ENCODE measurements at regions of chr2 and their contacts with region 1.

Region 1: DNA sequence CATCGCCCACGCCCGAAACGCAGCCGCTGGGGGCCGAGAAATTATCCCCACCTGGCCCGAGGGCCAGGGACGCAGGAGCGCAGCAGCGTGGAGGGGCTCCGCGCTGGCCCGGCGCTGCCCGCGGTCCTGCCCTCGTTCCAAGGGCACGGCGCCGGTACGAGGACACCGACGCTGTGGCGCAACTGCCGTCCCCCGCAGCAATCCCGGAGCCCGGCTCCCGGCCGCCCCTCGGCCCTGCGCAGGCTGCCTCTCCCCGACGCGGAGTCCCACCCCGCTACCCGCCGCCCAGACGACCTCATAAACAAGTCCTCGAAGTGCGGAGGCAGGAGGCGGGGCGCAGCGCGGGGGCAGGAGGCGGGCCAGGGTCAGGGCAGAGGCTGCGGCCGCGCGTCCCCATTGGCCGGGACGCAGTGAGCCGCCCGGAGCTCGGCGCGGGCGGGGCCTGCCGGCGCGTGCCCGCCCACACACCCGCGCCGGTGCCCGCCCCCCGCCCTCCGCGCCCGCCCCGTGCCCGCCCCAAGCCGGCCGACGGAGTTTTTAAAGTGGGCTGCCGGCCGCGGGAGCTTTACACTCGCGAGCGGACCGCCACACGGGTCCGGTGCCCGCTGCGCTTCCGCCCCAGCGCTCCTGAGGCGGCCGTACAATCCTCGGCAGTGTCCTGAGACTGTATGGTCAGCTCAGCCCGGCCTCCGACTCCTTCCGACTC is at the start of gene EPAS1:
- DNase-seq: peak; percentile 82 to 99 (median 94)
- ATAC-seq: peak; percentile 81
- H3K4me3 ChIP-seq: peak within 1 kb of the TSS; percentile 79 to 93
- H3K27ac ChIP-seq: peak within 1 kb of the TSS; percentile 91 to 97
- H3K4me1 ChIP-seq: peaks cover 12 to 38% of the 10 kb centered on the region in 2 donors
- H3K27me3 ChIP-seq: peaks cover 0 to 57% of the 10 kb centered on the region in 2 donors
- CTCF ChIP-seq: no peak
- polyA plus RNA-seq, gene EPAS1: 190 to 277 (median 237) TPM

Region 2: DNA sequence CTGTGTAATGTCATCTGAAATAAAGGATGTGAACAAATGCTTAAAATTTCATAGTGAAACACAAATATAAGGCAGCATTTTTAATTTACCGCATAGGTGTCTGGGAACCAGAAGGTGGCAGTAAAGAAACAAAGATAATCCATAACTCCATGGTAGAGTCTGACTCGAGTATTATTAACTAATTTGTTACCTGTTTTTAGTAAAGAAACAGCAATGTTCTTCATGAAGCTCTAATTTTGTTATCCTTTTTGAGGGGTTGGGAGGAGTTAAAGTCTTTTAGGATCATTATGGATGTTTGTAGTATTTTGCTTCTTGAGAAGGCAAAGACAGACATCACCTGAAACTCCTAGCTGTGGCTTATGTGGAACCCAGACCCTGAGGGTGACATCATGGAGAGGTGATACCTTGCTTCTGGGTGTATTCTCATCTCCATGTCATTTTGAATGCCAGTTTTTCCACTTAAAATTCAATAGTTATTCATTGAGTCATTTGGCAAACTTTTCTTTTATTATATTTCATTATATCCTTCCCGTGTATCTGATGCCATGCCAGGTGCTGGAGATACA is 286.0 kb before region 1 on chr2:
- intact Hi-C with region 1: loop called in 1 of 2 experiments (anchors 10 kb)
- DNase-seq: peak in 1 of 4 donors; percentile 53
- ATAC-seq: peak; percentile 81
- H3K4me3 ChIP-seq: no peak overlapping the region
- H3K27ac ChIP-seq: no peak overlapping the region
- H3K4me1 ChIP-seq: peaks cover 0 to 17% of the 10 kb centered on the region in 2 donors
- H3K27me3 ChIP-seq: no peaks in the 10 kb centered on the region
- CTCF ChIP-seq: peak; percentile 32 to 75

Region 3: GRCh38 chr2:46025676-46026075 is 271.3 kb before region 1 on chr2:
- intact Hi-C with region 1: no loop called
- DNase-seq: no peak
- ATAC-seq: no peak
- H3K4me3 ChIP-seq: no peak overlapping the region
- H3K27ac ChIP-seq: no peak overlapping the region
- H3K4me1 ChIP-seq: no peaks in the 10 kb centered on the region
- H3K27me3 ChIP-seq: no peaks in the 10 kb centered on the region
- CTCF ChIP-seq: no peak

Region 4: GRCh38 chr2:46351750-46352138 is 54.8 kb after region 1 on chr2:
- intact Hi-C with region 1: loop called in 1 of 2 experiments (anchors 10 kb)
- DNase-seq: peak in 2 of 4 donors; percentile 57 to 78
- ATAC-seq: peak; percentile 53
- H3K4me3 ChIP-seq: peak overlapping the region in 1 of 2 donors; percentile 13
- H3K27ac ChIP-seq: peak overlapping the region; percentile 58 to 60
- H3K4me1 ChIP-seq: peaks cover 0 to 71% of the 10 kb centered on the region in 2 donors
- H3K27me3 ChIP-seq: no peaks in the 10 kb centered on the region
- CTCF ChIP-seq: no peak

Measured in left lung (tissue), 14 donors.